ENCODE measurements at regions of chr4 and their contacts with region 1.

Region 1: GRCh38 chr4:22515145-22515887 is 550 bp downstream of the ADGRA3 start:
- DNase-seq: peak in 1 of 2 donors; percentile 77
- H3K4me3 ChIP-seq: peak overlapping the region; percentile 54 to 74
- H3K27ac ChIP-seq: peak overlapping the region; percentile 65 to 78
- H3K4me1 ChIP-seq: peaks cover 0 to 3% of the 10 kb centered on the region in 2 donors
- H3K27me3 ChIP-seq: no peaks in the 10 kb centered on the region
- CTCF ChIP-seq: no peak

Region 2: GRCh38 chr4:22233230-22233629 is 282.1 kb before region 1 on chr4:
- intact Hi-C with region 1: no loop called
- DNase-seq: no peak
- H3K4me3 ChIP-seq: no peak overlapping the region
- H3K27ac ChIP-seq: no peak overlapping the region
- H3K4me1 ChIP-seq: no peaks in the 10 kb centered on the region
- H3K27me3 ChIP-seq: no peaks in the 10 kb centered on the region
- CTCF ChIP-seq: no peak

Region 3: GRCh38 chr4:22595684-22596083 is 80.4 kb after region 1 on chr4:
- intact Hi-C with region 1: loop called (anchors 5 kb)
- DNase-seq: no peak
- H3K4me3 ChIP-seq: no peak overlapping the region
- H3K27ac ChIP-seq: no peak overlapping the region
- H3K4me1 ChIP-seq: peaks cover 0 to 3% of the 10 kb centered on the region in 2 donors
- H3K27me3 ChIP-seq: no peaks in the 10 kb centered on the region
- CTCF ChIP-seq: no peak

Region 4: GRCh38 chr4:22678940-22679854 is 163.9 kb after region 1 on chr4:
- intact Hi-C with region 1: loop called (anchors 5 kb)
- DNase-seq: no peak
- H3K4me3 ChIP-seq: peak overlapping the region in 1 of 2 donors; percentile 13
- H3K27ac ChIP-seq: peak overlapping the region; percentile 61 to 71
- H3K4me1 ChIP-seq: peaks cover 0 to 14% of the 10 kb centered on the region in 2 donors
- H3K27me3 ChIP-seq: no peaks in the 10 kb centered on the region
- CTCF ChIP-seq: no peak

Measured in ascending aorta (tissue), 2 donors.